ENCODE measurements at regions of chr6 and their contacts with region 1.

Region 1: GRCh38 chr6:70706491-70707123 is 38.9 kb downstream of the SMAP1 start:
- DNase-seq: no peak
- H3K4me3 ChIP-seq: no peak overlapping the region
- H3K27ac ChIP-seq: no peak overlapping the region
- H3K4me1 ChIP-seq: peaks cover 10% of the 10 kb centered on the region; the same call in 1 of the 2 replicates
- H3K27me3 ChIP-seq: no peaks in the 10 kb centered on the region
- CTCF ChIP-seq: peak; percentile 82

Region 2: GRCh38 chr6:70884074-70884983 is 177.7 kb after region 1 on chr6:
- CTCF ChIA-PET with region 1: interaction called, 4 read pairs
- POLR2A ChIA-PET with region 1: no interaction called
- intact Hi-C with region 1: loop called (anchors 1 kb)
- DNase-seq: peak in 1 of 2 experiments; percentile 52
- H3K4me3 ChIP-seq: no peak overlapping the region
- H3K27ac ChIP-seq: no peak overlapping the region
- H3K4me1 ChIP-seq: no peaks in the 10 kb centered on the region
- H3K27me3 ChIP-seq: no peaks in the 10 kb centered on the region; the same call in 1 of the 2 replicates
- CTCF ChIP-seq: peak; percentile 96

Region 3: DNA sequence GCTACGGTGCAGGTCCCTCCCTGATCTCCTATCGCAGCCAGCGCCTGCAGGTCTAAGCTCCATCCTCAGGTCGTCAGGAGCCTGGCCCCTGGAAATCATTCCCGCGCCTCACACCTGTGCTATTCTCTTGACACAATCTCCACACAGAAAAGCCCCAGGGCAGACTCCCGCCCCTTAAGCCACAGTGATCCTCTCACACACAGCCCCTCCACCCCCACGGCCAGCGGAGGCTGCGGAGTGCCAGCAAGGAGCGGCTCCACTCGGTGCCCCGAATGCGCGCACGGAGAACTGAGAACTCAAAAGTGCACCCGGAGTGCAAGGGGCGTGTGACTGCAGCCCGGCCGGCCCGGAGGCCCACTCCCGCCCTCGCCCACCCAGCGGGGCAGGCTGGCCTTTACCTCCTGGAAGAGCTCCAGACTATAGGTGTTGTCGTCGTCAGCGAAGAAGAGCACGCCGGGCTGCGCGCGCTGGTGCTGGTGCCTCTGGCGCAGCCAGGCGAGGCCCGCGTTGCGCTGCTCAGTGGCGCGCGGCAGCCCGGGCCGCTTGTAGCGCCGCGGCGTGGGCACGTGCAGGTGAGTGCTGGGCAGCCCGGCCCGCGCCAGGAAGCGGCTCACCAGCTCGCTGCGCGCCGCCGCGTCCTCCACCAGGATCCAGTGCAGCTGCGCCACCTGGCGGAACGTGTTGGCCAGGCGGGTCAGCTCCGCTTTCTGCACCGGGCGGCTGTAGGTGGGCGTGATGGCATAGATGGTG is 249.0 kb after region 1 on chr6:
- CTCF ChIA-PET with region 1: interaction called, 4 read pairs
- POLR2A ChIA-PET with region 1: no interaction called
- intact Hi-C with region 1: loop called (anchors 2 kb)
- DNase-seq: peak in 1 of 2 experiments; percentile 79
- H3K4me3 ChIP-seq: peak overlapping the region; percentile 8; the same call in 1 of the 2 replicates
- H3K27ac ChIP-seq: no peak overlapping the region
- H3K4me1 ChIP-seq: no peaks in the 10 kb centered on the region
- H3K27me3 ChIP-seq: peaks cover 14% of the 10 kb centered on the region
- CTCF ChIP-seq: peak; percentile 71

Region 4: GRCh38 chr6:71349395-71349794 is 642.8 kb after region 1 on chr6:
- CTCF ChIA-PET with region 1: no interaction called
- POLR2A ChIA-PET with region 1: no interaction called
- intact Hi-C with region 1: loop called (anchors 10 kb)
- DNase-seq: peak in 1 of 2 experiments; percentile 45
- H3K4me3 ChIP-seq: no peak overlapping the region
- H3K27ac ChIP-seq: no peak overlapping the region
- H3K4me1 ChIP-seq: no peaks in the 10 kb centered on the region
- H3K27me3 ChIP-seq: no peaks in the 10 kb centered on the region
- CTCF ChIP-seq: peak; percentile 86

Region 5: DNA sequence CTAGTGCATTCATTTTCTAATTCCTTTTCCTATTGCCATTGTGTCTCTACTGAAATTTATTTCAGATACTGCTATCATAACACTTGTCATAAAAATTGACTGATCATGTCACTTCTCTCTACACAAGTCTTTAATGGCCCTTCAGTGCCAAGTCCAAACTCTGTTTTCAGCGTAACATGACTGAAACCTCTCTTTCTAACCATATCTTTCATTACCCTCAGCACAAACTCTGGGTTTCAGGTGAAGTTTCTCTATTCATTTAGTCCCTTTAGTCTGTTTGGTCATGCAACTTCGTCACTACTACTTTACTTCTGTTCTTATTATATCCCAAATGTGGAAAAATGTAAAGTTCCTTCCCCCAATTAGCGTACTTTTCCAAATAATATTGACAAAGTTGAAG is 816.9 kb after region 1 on chr6:
- CTCF ChIA-PET with region 1: no interaction called
- POLR2A ChIA-PET with region 1: no interaction called
- intact Hi-C with region 1: no loop called
- DNase-seq: no peak
- H3K4me3 ChIP-seq: no peak overlapping the region
- H3K27ac ChIP-seq: no peak overlapping the region
- H3K4me1 ChIP-seq: 0 out of 2 replicates have a peak, but pooled peaks cover 5% of the 10 kb centered on the region
- H3K27me3 ChIP-seq: no peaks in the 10 kb centered on the region
- CTCF ChIP-seq: no peak

Region 6: DNA sequence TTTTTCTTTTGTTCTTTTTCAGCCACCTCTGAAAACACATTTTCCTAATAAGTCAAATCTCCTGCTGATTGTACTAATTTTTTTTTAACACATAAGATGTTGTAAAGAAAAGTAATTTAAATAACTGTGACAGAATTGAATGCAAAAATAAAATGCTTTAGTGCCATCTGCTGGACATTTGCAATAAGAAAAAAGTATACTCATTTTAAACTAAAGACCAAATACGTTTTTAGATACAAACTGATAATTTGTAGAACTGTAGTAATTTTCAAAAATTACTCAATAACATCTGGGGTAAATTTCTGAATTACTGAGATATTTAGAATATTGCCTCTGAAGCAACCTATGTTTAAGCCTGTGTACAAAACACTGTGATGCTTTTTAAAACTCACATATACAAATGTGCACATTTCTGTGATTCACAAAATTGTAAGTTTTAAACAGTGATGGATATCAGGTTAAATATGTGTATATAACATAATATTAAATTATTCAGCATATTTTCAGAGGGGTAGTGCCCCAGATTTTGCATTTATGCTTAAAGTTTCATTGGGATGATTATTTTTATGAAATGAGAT is 1378.5 kb after region 1 on chr6:
- CTCF ChIA-PET with region 1: no interaction called
- POLR2A ChIA-PET with region 1: no interaction called
- intact Hi-C with region 1: loop called (anchors 10 kb)
- DNase-seq: no peak
- H3K4me3 ChIP-seq: no peak overlapping the region
- H3K27ac ChIP-seq: no peak overlapping the region
- H3K4me1 ChIP-seq: no peaks in the 10 kb centered on the region
- H3K27me3 ChIP-seq: no peaks in the 10 kb centered on the region
- CTCF ChIP-seq: peak; percentile 77

Measured in PC-9 (cell line).